ENCODE measurements at regions of chr3 and their contacts with region 1.

Region 1: GRCh38 chr3:48811524-48811923 is 36.1 kb downstream of the PRKAR2A start:
- DNase-seq: no peak
- ATAC-seq: no peak
- H3K4me3 ChIP-seq: no peak overlapping the region
- H3K4me3 Mint-ChIP-seq: peak overlapping the region in 1 of 3 donors; percentile 23
- H3K27ac ChIP-seq: peak overlapping the region; percentile 86
- H3K27ac Mint-ChIP-seq: peak overlapping the region; percentile 78 to 84
- H3K4me1 ChIP-seq: peaks cover 0 to 30% of the 10 kb centered on the region in 2 experiments
- H3K4me1 Mint-ChIP-seq: peaks cover 38 to 42% (median 38%) of the 10 kb centered on the region in 3 donors
- H3K27me3 ChIP-seq: no peaks in the 10 kb centered on the region
- H3K27me3 Mint-ChIP-seq: no peaks in the 10 kb centered on the region

Region 2: GRCh38 chr3:48240711-48241491 is 570.6 kb before region 1 on chr3 and contains the start of gene ZNF589:
- CTCF ChIA-PET with region 1: no interaction called
- POLR2A ChIA-PET with region 1: no interaction called
- DNase-seq: peak; percentile 82 to 99 (median 93)
- ATAC-seq: peak; percentile 97 to 99 (median 99)
- H3K4me3 ChIP-seq: peak within 1 kb of the TSS; percentile 85 to 98
- H3K4me3 Mint-ChIP-seq: peak within 1 kb of the TSS; percentile 85 to 92 (median 90)
- H3K27ac ChIP-seq: peak within 1 kb of the TSS; percentile 82
- H3K27ac Mint-ChIP-seq: peak within 1 kb of the TSS; percentile 90 to 91
- H3K4me1 ChIP-seq: peaks cover 2 to 32% of the 10 kb centered on the region in 2 experiments
- H3K4me1 Mint-ChIP-seq: peaks cover 19 to 31% (median 22%) of the 10 kb centered on the region in 3 donors
- H3K27me3 ChIP-seq: no peaks in the 10 kb centered on the region
- H3K27me3 Mint-ChIP-seq: no peaks in the 10 kb centered on the region
- total RNA-seq, gene ZNF589: 34.4 to 47.6 (median 44.2) TPM

Region 3: GRCh38 chr3:48765376-48765775 is 46.1 kb before region 1 on chr3:
- CTCF ChIA-PET with region 1: no interaction called
- POLR2A ChIA-PET with region 1: no interaction called
- DNase-seq: peak in 1 of 35 experiments; percentile 19
- ATAC-seq: peak in 1 of 4 experiments; percentile 36
- H3K4me3 ChIP-seq: no peak overlapping the region
- H3K4me3 Mint-ChIP-seq: no peak overlapping the region
- H3K27ac ChIP-seq: no peak overlapping the region
- H3K27ac Mint-ChIP-seq: no peak overlapping the region
- H3K4me1 ChIP-seq: no peaks in the 10 kb centered on the region
- H3K4me1 Mint-ChIP-seq: no peaks in the 10 kb centered on the region
- H3K27me3 ChIP-seq: no peaks in the 10 kb centered on the region
- H3K27me3 Mint-ChIP-seq: no peaks in the 10 kb centered on the region

Region 4: DNA sequence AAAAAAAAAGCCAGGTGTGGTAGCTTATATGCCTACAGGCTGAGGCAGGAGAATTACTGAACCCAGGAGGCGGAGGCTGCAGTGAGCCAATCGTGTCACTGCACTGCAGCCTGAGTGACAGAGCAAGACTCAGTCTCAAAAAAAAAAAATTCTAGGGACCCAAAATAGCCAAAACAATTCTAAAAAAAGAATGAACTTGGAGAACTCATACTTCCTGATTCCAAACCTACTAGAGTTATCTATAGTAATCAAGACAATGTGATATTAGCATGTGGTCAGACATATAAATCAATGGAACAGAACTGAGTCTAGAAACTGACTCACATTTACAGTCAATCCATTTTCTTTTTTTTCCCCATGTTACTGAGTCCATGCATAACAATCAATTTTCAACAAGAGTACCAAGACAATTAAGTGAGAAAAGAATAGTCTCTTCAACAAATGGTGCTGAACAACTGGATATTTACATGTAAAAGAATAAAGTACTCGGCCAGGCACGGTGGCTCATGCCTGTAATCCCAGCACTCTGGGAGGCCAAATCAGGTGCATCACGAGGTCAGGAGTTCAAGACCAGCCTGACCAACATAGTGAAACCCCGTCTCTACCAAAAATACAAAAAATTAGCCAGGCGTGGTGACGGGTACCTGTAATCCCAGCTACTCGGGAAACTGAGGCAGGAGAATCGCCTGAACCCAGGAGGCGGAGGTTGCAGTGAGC is 24.3 kb after region 1 on chr3:
- CTCF ChIA-PET with region 1: interaction called, 4 read pairs
- POLR2A ChIA-PET with region 1: interaction called, 3 to 11 read pairs
- DNase-seq: no peak
- ATAC-seq: no peak
- H3K4me3 ChIP-seq: no peak overlapping the region
- H3K4me3 Mint-ChIP-seq: no peak overlapping the region
- H3K27ac ChIP-seq: no peak overlapping the region
- H3K27ac Mint-ChIP-seq: no peak overlapping the region
- H3K4me1 ChIP-seq: no peaks in the 10 kb centered on the region
- H3K4me1 Mint-ChIP-seq: peaks cover 17 to 24% (median 23%) of the 10 kb centered on the region in 3 donors
- H3K27me3 ChIP-seq: no peaks in the 10 kb centered on the region
- H3K27me3 Mint-ChIP-seq: no peaks in the 10 kb centered on the region

Region 5: GRCh38 chr3:48847504-48848423 is 36.2 kb after region 1 on chr3 and contains the start of gene PRKAR2A:
- CTCF ChIA-PET with region 1: no interaction called
- POLR2A ChIA-PET with region 1: interaction called in 1 of 2 experiments, 22 read pairs
- DNase-seq: peak; percentile 54 to 89 (median 70)
- ATAC-seq: peak; percentile 78 to 90 (median 85)
- H3K4me3 ChIP-seq: peak within 1 kb of the TSS; percentile 81 to 85
- H3K4me3 Mint-ChIP-seq: peak within 1 kb of the TSS; percentile 87 to 89 (median 87)
- H3K27ac ChIP-seq: peak within 1 kb of the TSS; percentile 91
- H3K27ac Mint-ChIP-seq: peak within 1 kb of the TSS; percentile 96 to 97
- H3K4me1 ChIP-seq: peaks cover 4 to 31% of the 10 kb centered on the region in 2 experiments
- H3K4me1 Mint-ChIP-seq: peaks cover 23 to 34% (median 29%) of the 10 kb centered on the region in 3 donors
- H3K27me3 ChIP-seq: no peaks in the 10 kb centered on the region
- H3K27me3 Mint-ChIP-seq: no peaks in the 10 kb centered on the region
- total RNA-seq, gene PRKAR2A: 30.9 to 51.8 (median 49.0) TPM

Measured in T-cell (primary cell).